Naive thymus-derived CD4-positive, alpha-beta T cell (primary cell): ENCODE measurements at regions of chr13 and their contacts with region 1.

Region 1: GRCh38 chr13:97359181-97360057 is 74.5 kb upstream of the RAP2A start:
- DNase-seq: peak in 8 of 9 donors; percentile 24 to 64 (median 54)
- ATAC-seq: peak; percentile 97
- H3K4me3 ChIP-seq: no peak overlapping the region
- H3K4me3 Mint-ChIP-seq: no peak overlapping the region
- H3K27ac ChIP-seq: no peak overlapping the region
- H3K27ac Mint-ChIP-seq: peak overlapping the region in 3 of 9 donors; percentile 3 to 46 (median 22)
- H3K4me1 ChIP-seq: no peaks in the 10 kb centered on the region
- H3K4me1 Mint-ChIP-seq: peaks cover 0 to 4% (median 0%) of the 10 kb centered on the region in 7 donors
- H3K27me3 ChIP-seq: no peaks in the 10 kb centered on the region
- H3K27me3 Mint-ChIP-seq: no peaks in the 10 kb centered on the region

Region 2: DNA sequence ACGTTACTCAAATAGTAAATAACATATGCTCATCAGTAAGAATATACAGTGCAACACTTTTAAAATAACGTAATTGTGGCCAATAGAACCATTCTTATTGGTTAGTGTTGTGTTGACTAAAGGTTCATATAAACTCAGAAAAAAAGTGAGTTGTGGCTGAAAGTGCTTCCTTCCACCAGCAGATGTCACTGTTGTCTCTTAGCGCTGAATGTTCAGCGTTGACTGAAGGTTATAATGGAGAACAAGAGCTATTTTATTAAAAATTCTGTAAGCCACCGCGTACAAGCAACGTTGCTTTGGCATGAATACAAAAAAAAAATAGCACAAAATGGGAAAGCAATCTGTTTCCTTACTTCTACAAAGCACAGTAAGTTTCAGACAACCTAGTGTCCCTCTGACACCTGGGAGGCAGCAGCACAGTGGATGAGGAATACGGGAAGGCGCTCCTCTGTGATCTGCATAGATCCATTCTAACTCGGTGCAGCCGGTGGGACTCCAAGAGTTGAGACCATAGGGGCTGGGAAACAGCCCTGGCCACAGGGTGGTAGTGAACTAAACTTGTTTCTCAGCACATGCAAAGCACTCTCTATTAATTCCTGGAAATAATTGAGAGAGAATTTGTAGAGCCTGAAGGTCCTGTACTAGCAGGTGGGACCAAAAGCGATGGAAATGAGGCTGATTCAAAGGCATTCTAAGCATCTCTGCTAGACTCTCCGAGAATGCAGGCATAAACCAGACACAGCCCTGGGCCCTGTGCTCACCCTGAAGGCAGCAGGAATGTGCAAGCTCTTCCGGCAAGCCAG is 341.2 kb before region 1 on chr13:
- CTCF ChIA-PET with region 1: no interaction called
- POLR2A ChIA-PET with region 1: no interaction called
- intact Hi-C with region 1: loop called (anchors 1 kb)
- DNase-seq: peak in 5 of 9 donors; percentile 25 to 45 (median 30)
- ATAC-seq: peak; percentile 69
- H3K4me3 ChIP-seq: no peak overlapping the region
- H3K4me3 Mint-ChIP-seq: peak overlapping the region in 1 of 10 donors; percentile 23
- H3K27ac ChIP-seq: no peak overlapping the region
- H3K27ac Mint-ChIP-seq: no peak overlapping the region
- H3K4me1 ChIP-seq: no peaks in the 10 kb centered on the region
- H3K4me1 Mint-ChIP-seq: peaks cover 4 to 13% (median 7%) of the 10 kb centered on the region in 7 donors
- H3K27me3 ChIP-seq: no peaks in the 10 kb centered on the region
- H3K27me3 Mint-ChIP-seq: peaks cover 26 to 65% (median 39%) of the 10 kb centered on the region in 5 donors

Region 3: GRCh38 chr13:97030705-97031452 is 328.5 kb before region 1 on chr13:
- CTCF ChIA-PET with region 1: no interaction called
- POLR2A ChIA-PET with region 1: no interaction called
- intact Hi-C with region 1: loop called in 1 of 2 experiments (anchors 5 kb)
- DNase-seq: no peak
- ATAC-seq: no peak
- H3K4me3 ChIP-seq: no peak overlapping the region
- H3K4me3 Mint-ChIP-seq: no peak overlapping the region
- H3K27ac ChIP-seq: no peak overlapping the region
- H3K27ac Mint-ChIP-seq: no peak overlapping the region
- H3K4me1 ChIP-seq: no peaks in the 10 kb centered on the region
- H3K4me1 Mint-ChIP-seq: peaks cover 0 to 2% (median 0%) of the 10 kb centered on the region in 7 donors
- H3K27me3 ChIP-seq: no peaks in the 10 kb centered on the region
- H3K27me3 Mint-ChIP-seq: peaks cover 7 to 37% (median 29%) of the 10 kb centered on the region in 5 donors

Region 4: DNA sequence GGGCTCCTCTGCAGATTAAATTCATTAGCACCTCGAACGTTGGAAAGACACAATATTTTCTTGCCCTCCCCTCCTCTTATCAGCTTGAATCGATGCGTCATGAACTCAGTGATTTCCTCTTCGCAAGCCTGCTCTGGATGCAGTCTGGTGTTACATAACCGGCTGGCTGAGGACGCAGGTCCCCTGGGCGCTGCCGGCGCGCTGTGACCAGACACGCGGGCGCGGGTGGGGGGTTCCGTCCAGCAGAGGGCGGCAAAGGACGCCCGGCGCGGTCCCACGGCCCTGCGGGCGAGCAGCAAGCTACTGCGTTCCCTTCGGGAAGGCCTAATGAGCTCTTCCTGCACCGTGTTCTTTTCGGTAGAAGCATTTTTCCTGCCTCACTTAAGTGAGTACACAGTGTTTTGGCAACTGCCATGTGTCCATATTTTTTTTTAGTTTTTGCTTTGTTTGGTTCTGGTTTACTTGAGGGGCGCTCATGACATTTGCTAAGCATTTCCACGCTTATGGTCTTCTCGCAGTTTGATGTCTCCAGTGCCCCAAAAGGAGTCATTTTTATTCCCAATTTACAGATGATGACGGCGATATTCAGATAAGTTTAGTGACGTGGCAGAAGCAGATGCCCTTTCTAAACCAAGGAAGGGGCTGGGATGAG is 249.5 kb before region 1 on chr13:
- CTCF ChIA-PET with region 1: interaction called, 135 read pairs
- POLR2A ChIA-PET with region 1: interaction called, 5 read pairs
- intact Hi-C with region 1: loop called (anchors 1 kb)
- DNase-seq: peak; percentile 59 to 85 (median 76)
- ATAC-seq: peak; percentile 97
- H3K4me3 ChIP-seq: no peak overlapping the region
- H3K4me3 Mint-ChIP-seq: peak overlapping the region in 9 of 10 donors; percentile 19 to 71 (median 45)
- H3K27ac ChIP-seq: no peak overlapping the region
- H3K27ac Mint-ChIP-seq: peak overlapping the region in 1 of 9 donors; percentile 68
- H3K4me1 ChIP-seq: peaks cover 3 to 9% of the 10 kb centered on the region in 2 donors
- H3K4me1 Mint-ChIP-seq: peaks cover 7 to 19% (median 15%) of the 10 kb centered on the region in 7 donors
- H3K27me3 ChIP-seq: no peaks in the 10 kb centered on the region
- H3K27me3 Mint-ChIP-seq: peaks cover 8 to 23% (median 19%) of the 10 kb centered on the region in 5 donors

Region 5: GRCh38 chr13:97344265-97345175 is 14.9 kb before region 1 on chr13:
- CTCF ChIA-PET with region 1: interaction called, 4 read pairs
- POLR2A ChIA-PET with region 1: no interaction called
- intact Hi-C with region 1: loop called in 1 of 2 experiments (anchors 1 kb)
- DNase-seq: peak in 6 of 9 donors; percentile 22 to 53 (median 39)
- ATAC-seq: peak; percentile 54
- H3K4me3 ChIP-seq: no peak overlapping the region
- H3K4me3 Mint-ChIP-seq: no peak overlapping the region
- H3K27ac ChIP-seq: no peak overlapping the region
- H3K27ac Mint-ChIP-seq: no peak overlapping the region
- H3K4me1 ChIP-seq: no peaks in the 10 kb centered on the region
- H3K4me1 Mint-ChIP-seq: peaks cover 0 to 4% (median 0%) of the 10 kb centered on the region in 7 donors
- H3K27me3 ChIP-seq: no peaks in the 10 kb centered on the region
- H3K27me3 Mint-ChIP-seq: no peaks in the 10 kb centered on the region

Region 6: DNA sequence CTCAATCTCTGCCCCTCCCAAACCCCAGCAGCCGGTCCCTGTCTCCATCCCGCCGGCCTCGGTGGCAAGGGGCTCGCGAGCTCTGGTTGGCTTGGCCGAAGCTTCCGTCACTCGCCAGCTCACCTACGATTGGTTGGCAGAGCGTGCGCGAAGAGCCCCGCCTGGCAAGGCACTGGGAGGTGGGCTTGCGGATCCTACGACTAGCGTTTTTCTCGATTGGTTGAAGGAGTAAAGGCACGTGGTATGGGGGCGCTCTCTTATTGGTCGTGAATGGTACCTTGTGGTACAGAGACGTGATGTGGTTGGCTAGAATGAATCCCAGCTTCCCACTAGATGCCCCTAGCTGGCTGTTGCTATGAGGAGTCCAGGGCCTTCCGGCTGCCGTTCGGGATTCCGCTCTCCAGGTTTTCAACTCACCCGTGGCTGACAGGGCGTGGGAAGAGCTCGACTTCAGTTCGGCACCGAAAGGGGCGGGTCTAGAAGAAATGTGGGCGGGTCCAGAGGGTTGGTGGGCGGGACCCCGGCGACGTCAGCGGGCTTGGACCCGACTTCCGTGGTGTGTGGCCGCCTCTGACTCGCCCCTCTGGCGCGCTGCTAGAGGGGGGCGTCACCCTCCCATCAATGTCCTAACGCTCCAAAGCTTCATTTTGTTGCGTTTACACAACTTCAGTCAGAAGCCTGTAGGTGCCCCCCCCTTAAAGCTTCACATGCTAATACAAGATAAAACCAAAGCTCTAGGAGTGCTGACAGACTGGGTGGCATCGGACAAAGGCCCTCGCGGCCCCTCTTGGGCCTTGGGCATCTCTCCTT is 73.7 kb after region 1 on chr13:
- CTCF ChIA-PET with region 1: no interaction called
- POLR2A ChIA-PET with region 1: no interaction called
- intact Hi-C with region 1: no loop called
- DNase-seq: peak; percentile 97 to 99 (median 99)
- ATAC-seq: peak; percentile 85
- H3K4me3 ChIP-seq: peak overlapping the region; percentile 93
- H3K4me3 Mint-ChIP-seq: peak overlapping the region; percentile 90 to 99 (median 96)
- H3K27ac ChIP-seq: peak overlapping the region; percentile 100
- H3K27ac Mint-ChIP-seq: peak overlapping the region; percentile 98 to 100 (median 100)
- H3K4me1 ChIP-seq: peaks cover 0 to 8% of the 10 kb centered on the region in 2 donors
- H3K4me1 Mint-ChIP-seq: peaks cover 13 to 36% (median 30%) of the 10 kb centered on the region in 7 donors
- H3K27me3 ChIP-seq: no peaks in the 10 kb centered on the region
- H3K27me3 Mint-ChIP-seq: peaks cover 0 to 11% (median 7%) of the 10 kb centered on the region in 5 donors